SK-N-SH (cell line): ENCODE measurements at regions of chr3 and their contacts with region 1.

Region 1: DNA sequence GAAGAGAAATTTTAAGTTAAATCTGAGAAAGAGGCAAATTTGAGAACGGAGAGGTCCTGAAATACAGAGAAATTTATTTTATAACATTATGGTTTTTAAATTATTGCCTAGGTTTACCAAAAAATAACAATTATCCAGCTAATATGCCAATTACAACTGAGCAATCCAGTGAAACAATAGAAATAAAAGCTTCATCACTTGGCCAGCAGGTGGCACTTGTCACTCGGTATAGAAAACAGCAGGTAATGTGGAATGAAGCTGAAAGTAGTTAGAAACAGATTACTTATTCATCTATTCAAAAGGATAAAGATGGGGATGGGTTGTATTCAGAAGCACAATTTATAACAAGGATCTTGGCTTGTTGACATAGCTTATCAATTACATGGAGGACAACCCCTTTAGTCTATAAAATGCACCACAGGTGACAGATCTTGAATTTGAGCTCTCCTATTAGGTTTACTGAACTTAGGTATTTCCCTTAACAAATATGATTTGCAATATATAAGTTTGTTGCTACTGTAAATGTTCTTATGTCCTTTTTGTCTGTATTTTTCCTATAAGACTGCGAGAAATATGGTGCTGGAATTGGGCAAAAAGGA is 70.1 kb upstream of the GUCA1C start:
- DNase-seq: peak; percentile 27
- H3K4me3 ChIP-seq: no peak overlapping the region; a peak in 1 of 4 replicates
- H3K27ac ChIP-seq: no peak overlapping the region
- H3K4me1 ChIP-seq: no peaks in the 10 kb centered on the region
- H3K27me3 ChIP-seq: no peaks in the 10 kb centered on the region; the same call in 1 of the 2 replicates
- CTCF ChIP-seq: peak; percentile 86
- EP300 ChIP-seq: no peak
- RAD21 ChIP-seq: peak; percentile 74

Region 2: GRCh38 chr3:108662130-108662738 is 361.5 kb before region 1 on chr3:
- CTCF ChIA-PET with region 1: interaction called, 11 read pairs
- POLR2A ChIA-PET with region 1: no interaction called
- DNase-seq: peak; percentile 53
- H3K4me3 ChIP-seq: no peak overlapping the region; a peak in 1 of 4 replicates
- H3K27ac ChIP-seq: no peak overlapping the region
- H3K4me1 ChIP-seq: no peaks in the 10 kb centered on the region
- H3K27me3 ChIP-seq: no peaks in the 10 kb centered on the region
- CTCF ChIP-seq: peak; percentile 87
- EP300 ChIP-seq: no peak
- RAD21 ChIP-seq: peak; percentile 92

Region 3: DNA sequence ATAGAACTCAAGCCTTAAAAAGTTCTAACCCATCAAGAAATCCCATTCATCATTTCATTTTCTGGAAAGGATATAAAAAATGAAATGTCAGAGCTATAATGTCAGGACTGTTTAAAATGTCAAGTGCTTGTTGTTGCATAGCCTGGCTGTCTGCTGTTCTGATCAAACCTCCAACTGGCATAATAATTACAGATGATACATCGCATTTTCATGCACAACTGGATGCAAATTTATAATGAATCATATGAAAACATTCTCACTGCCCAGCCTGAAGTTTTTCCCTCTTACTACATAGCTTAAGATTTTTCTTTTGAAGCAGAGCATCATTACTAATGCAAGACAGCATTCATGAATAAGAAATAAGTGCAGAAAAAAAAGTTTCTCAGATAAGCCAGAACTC is 116.6 kb before region 1 on chr3:
- CTCF ChIA-PET with region 1: no interaction called
- POLR2A ChIA-PET with region 1: no interaction called
- DNase-seq: no peak
- H3K4me3 ChIP-seq: no peak overlapping the region
- H3K27ac ChIP-seq: no peak overlapping the region
- H3K4me1 ChIP-seq: no peaks in the 10 kb centered on the region; a peak in 1 of 4 replicates
- H3K27me3 ChIP-seq: no peaks in the 10 kb centered on the region
- CTCF ChIP-seq: no peak
- EP300 ChIP-seq: no peak
- RAD21 ChIP-seq: no peak

Region 4: GRCh38 chr3:109059264-109059663 is 35.5 kb after region 1 on chr3:
- CTCF ChIA-PET with region 1: interaction called, 12 read pairs
- POLR2A ChIA-PET with region 1: no interaction called
- DNase-seq: no peak
- H3K4me3 ChIP-seq: no peak overlapping the region
- H3K27ac ChIP-seq: no peak overlapping the region
- H3K4me1 ChIP-seq: no peaks in the 10 kb centered on the region
- H3K27me3 ChIP-seq: no peaks in the 10 kb centered on the region
- CTCF ChIP-seq: no peak
- EP300 ChIP-seq: no peak
- RAD21 ChIP-seq: no peak

Region 5: GRCh38 chr3:109081746-109082510 is 58.2 kb after region 1 on chr3:
- CTCF ChIA-PET with region 1: interaction called, 55 read pairs
- POLR2A ChIA-PET with region 1: no interaction called
- DNase-seq: peak; percentile 34
- H3K4me3 ChIP-seq: no peak overlapping the region; a peak in 1 of 4 replicates
- H3K27ac ChIP-seq: no peak overlapping the region
- H3K4me1 ChIP-seq: no peaks in the 10 kb centered on the region
- H3K27me3 ChIP-seq: no peaks in the 10 kb centered on the region
- CTCF ChIP-seq: peak; percentile 87
- EP300 ChIP-seq: no peak
- RAD21 ChIP-seq: peak; percentile 77

Region 6: GRCh38 chr3:109098079-109098644 is 74.4 kb after region 1 on chr3:
- CTCF ChIA-PET with region 1: interaction called, 18 read pairs
- POLR2A ChIA-PET with region 1: no interaction called
- DNase-seq: no peak
- H3K4me3 ChIP-seq: no peak overlapping the region
- H3K27ac ChIP-seq: no peak overlapping the region
- H3K4me1 ChIP-seq: no peaks in the 10 kb centered on the region
- H3K27me3 ChIP-seq: no peaks in the 10 kb centered on the region
- CTCF ChIP-seq: no peak
- EP300 ChIP-seq: no peak
- RAD21 ChIP-seq: peak; percentile 34

Region 7: DNA sequence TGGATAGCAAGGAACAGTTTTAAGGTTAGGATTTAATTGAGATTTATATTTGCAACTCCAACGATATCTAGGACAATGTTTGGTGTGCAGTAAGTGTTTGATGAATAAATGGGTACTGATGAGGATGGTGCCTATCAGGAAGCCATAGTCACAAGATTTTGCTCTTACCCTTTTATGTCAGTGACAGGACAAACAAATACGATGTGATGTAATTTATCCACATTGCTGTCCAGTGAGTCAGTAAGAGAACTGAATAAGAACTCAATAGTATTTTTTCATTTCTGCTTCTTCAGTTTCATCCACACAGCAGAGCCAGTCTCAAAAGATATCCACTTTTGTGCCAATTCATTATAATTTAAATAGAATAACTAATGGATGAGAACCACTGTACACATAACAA is 131.2 kb after region 1 on chr3:
- CTCF ChIA-PET with region 1: no interaction called
- POLR2A ChIA-PET with region 1: no interaction called
- DNase-seq: no peak
- H3K4me3 ChIP-seq: no peak overlapping the region
- H3K27ac ChIP-seq: no peak overlapping the region
- H3K4me1 ChIP-seq: no peaks in the 10 kb centered on the region
- H3K27me3 ChIP-seq: no peaks in the 10 kb centered on the region
- CTCF ChIP-seq: no peak
- EP300 ChIP-seq: no peak
- RAD21 ChIP-seq: no peak